ENCODE measurements at regions of chr1 and their contacts with region 1.

Region 1: DNA sequence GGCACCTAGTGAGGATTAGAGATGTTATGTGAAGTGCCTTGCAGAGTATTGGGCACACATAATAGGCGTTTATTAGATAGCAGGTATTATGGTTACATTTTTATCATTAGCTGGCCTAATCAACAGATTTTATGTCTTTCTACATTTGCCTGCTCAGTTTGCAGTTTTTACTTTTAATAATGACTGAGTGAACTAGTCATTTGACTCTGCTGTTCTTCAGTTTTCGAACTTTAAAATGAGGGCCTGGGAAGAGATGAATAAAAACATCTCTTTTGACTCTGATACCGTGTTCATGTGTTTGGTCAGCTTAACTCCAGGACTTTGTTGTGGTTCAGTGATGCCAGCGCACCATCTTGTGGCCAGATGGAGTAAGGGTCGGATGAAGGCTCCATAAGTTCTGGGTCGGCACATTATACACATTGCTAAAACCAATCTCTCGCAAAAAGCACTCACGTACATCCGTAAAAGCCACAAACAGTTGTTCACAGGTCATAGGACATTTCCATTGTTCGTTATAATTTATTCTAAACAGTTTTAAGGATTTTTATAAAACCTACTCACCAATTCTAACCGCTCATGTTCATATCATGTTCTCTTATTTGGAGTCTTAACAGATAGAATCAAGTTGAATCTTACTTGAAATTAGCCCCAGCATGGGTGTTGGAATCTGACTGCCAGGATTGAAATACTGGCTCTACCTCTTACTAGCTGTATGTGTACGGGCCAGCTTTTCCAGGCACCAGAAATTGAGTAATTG is 78.4 kb upstream of the GPR88 start:
- DNase-seq: peak; percentile 44 to 59
- H3K4me3 ChIP-seq: no peak overlapping the region
- H3K4me3 Mint-ChIP-seq: no peak overlapping the region
- H3K27ac Mint-ChIP-seq: peak overlapping the region; percentile 58
- H3K4me1 ChIP-seq: no peaks in the 10 kb centered on the region
- H3K4me1 Mint-ChIP-seq: no peaks in the 10 kb centered on the region
- H3K27me3 ChIP-seq: no peaks in the 10 kb centered on the region
- H3K27me3 Mint-ChIP-seq: no peaks in the 10 kb centered on the region
- CTCF ChIP-seq: peak; percentile 53 to 72

Region 2: DNA sequence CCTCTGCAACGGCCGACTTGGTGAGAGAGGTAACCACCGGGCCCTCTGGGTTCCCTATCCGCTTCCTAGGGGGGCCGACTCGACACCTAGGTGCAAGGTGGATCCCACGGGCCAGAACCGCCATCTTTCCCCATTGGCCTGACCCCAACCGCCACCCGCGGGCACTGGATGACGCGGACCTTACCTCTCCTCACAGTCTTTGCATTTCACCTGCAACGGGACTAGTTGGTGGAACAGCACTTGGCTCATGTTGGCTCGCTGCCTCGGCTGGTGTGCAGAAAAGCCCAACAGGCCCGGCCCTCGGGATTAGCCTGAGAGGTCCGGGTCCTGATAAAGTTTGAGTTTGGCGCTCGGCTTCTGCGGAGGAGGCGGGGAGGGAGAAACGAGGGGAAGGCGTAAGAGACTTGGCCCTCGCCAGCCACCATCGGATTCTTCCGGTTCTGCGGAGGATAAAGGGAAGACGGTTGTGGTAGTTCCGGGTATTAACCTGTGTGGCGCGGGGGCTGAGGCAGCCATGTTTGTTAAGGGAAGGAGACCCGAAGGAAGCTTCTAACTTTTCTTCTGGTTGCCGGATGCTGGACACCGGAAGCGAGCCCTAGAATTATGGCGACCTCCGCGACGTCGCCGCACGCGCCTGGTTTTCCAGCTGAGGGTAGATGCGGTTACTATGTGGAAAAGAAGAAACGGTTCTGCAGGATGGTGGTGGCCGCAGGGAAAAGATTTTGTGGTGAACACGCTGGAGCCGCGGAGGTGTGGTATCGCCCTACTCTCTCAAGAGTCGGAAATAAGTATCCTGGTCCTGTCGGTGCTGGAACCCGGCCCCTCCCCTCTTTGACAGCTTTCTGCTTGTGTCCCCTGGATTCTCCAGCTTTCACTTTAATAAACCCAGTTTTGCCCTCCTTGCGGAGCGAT is 326.7 kb before region 1 on chr1 and contains the starts of genes SASS6 and TRMT13:
- CTCF ChIA-PET with region 1: interaction called, 4 read pairs
- POLR2A ChIA-PET with region 1: no interaction called
- intact Hi-C with region 1: loop called (anchors 10 kb)
- DNase-seq: peak; percentile 91 to 95
- H3K4me3 ChIP-seq: peak within 1 kb of the TSS; percentile 50
- H3K4me3 Mint-ChIP-seq: peak within 1 kb of the TSS; percentile 98
- H3K27ac Mint-ChIP-seq: peak within 1 kb of the TSS; percentile 99
- H3K4me1 ChIP-seq: no peaks in the 10 kb centered on the region
- H3K4me1 Mint-ChIP-seq: no peaks in the 10 kb centered on the region
- H3K27me3 ChIP-seq: no peaks in the 10 kb centered on the region
- H3K27me3 Mint-ChIP-seq: no peaks in the 10 kb centered on the region
- CTCF ChIP-seq: no peak
- total RNA-seq, gene SASS6: 9.5 and 10.1 TPM in 2 replicates
- total RNA-seq, gene TRMT13: 12.6 and 14.5 TPM in 2 replicates

Region 3: DNA sequence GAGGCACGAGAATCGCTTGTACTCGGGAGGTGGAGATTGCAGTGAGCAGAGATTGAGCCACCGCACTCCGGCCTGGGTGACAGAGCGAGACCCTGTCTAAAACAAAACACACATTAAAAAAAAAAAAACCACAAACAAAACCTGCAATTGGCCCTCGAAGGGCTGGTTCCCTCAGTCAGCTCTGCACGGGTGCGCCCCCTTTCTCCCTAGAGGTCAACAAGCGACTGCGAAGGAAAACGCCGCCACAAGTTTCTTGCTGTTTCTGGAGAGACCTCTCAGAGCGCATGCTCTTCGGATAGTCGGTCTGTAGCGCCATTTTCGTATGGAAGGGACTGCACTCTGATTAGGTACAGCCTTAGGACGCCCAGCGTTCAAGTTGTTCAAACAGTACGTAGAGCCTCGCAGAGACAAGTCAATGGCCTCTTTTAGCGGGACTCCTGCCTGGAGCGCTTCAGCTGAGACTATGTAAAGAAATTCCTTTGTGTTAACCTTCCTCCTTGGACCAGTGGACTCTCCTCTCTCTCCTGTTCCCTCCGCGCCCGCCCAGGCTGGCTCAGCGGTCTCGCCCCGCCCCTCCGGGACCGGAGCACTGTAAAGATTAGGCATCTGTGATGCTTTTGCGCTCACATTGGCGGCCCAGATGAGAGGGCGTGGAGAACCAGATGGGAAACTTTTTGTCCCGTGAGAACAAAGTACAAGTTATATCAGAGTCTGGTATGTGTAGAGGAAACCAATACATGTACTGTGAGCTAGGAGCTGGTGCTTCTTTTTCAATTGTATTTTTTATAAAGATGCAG is 108.2 kb before region 1 on chr1:
- CTCF ChIA-PET with region 1: interaction called, 5 read pairs
- POLR2A ChIA-PET with region 1: no interaction called
- intact Hi-C with region 1: loop called (anchors 1 kb)
- DNase-seq: peak; percentile 89 to 91
- H3K4me3 ChIP-seq: peak overlapping the region; percentile 86
- H3K4me3 Mint-ChIP-seq: peak overlapping the region; percentile 95
- H3K27ac Mint-ChIP-seq: peak overlapping the region; percentile 94
- H3K4me1 ChIP-seq: peaks cover 15% of the 10 kb centered on the region
- H3K4me1 Mint-ChIP-seq: peaks cover 28% of the 10 kb centered on the region
- H3K27me3 ChIP-seq: no peaks in the 10 kb centered on the region
- H3K27me3 Mint-ChIP-seq: no peaks in the 10 kb centered on the region
- CTCF ChIP-seq: peak; percentile 23 to 48

Region 4: DNA sequence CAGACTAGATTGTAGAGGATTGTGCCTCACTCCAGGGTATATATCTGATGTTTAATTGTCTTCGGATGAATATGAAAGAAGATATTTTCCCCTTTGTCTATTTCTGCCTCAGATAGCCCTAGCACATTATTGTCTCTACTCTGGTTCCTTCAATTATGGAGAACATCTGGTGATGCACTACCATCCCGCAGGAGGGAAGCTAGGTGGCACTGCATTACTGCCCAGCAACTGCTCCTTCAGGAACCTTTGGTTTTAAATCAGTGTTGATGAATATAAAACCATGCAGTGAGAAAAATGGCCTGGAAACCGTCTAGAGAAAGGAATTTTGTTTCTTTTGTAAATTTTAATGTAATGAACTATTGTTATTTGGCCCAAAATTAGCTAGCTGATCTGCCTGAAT is 146.9 kb after region 1 on chr1:
- CTCF ChIA-PET with region 1: no interaction called
- POLR2A ChIA-PET with region 1: no interaction called
- intact Hi-C with region 1: loop called (anchors 5 kb)
- DNase-seq: no peak
- H3K4me3 ChIP-seq: no peak overlapping the region
- H3K4me3 Mint-ChIP-seq: no peak overlapping the region
- H3K27ac Mint-ChIP-seq: no peak overlapping the region
- H3K4me1 ChIP-seq: no peaks in the 10 kb centered on the region
- H3K4me1 Mint-ChIP-seq: no peaks in the 10 kb centered on the region
- H3K27me3 ChIP-seq: no peaks in the 10 kb centered on the region
- H3K27me3 Mint-ChIP-seq: no peaks in the 10 kb centered on the region
- CTCF ChIP-seq: peak; percentile 31 to 55

Measured in Caco-2 (cell line).